Heart left ventricle (tissue), 16 donors: ENCODE measurements at regions of chr4 and their contacts with region 1.

Region 1: GRCh38 chr4:153634738-153635353 is 49.2 kb upstream of the TLR2 start:
- DNase-seq: no peak
- ATAC-seq: peak in 3 of 4 donors; percentile 41 to 62 (median 53)
- H3K4me3 ChIP-seq: no peak overlapping the region
- H3K27ac ChIP-seq: no peak overlapping the region
- H3K4me1 ChIP-seq: peaks cover 0 to 3% (median 0%) of the 10 kb centered on the region in 12 donors
- H3K27me3 ChIP-seq: no peaks in the 10 kb centered on the region
- CTCF ChIP-seq: peak; percentile 46 to 70 (median 60)
- POLR2A ChIP-seq: no peak

Region 2: GRCh38 chr4:153750197-153750817 is 115.5 kb after region 1 on chr4:
- intact Hi-C with region 1: loop called (anchors 1 to 5 kb)
- DNase-seq: peak in 3 of 5 donors; percentile 39 to 61 (median 56)
- ATAC-seq: peak; percentile 51 to 77 (median 70)
- H3K4me3 ChIP-seq: no peak overlapping the region
- H3K27ac ChIP-seq: no peak overlapping the region
- H3K4me1 ChIP-seq: peaks cover 0 to 28% (median 0%) of the 10 kb centered on the region in 12 donors
- H3K27me3 ChIP-seq: peaks cover 0 to 5% (median 0%) of the 10 kb centered on the region in 9 donors
- CTCF ChIP-seq: peak; percentile 49 to 75 (median 64)
- POLR2A ChIP-seq: no peak